ENCODE measurements at regions of chr14 and their contacts with region 1.

Region 1: DNA sequence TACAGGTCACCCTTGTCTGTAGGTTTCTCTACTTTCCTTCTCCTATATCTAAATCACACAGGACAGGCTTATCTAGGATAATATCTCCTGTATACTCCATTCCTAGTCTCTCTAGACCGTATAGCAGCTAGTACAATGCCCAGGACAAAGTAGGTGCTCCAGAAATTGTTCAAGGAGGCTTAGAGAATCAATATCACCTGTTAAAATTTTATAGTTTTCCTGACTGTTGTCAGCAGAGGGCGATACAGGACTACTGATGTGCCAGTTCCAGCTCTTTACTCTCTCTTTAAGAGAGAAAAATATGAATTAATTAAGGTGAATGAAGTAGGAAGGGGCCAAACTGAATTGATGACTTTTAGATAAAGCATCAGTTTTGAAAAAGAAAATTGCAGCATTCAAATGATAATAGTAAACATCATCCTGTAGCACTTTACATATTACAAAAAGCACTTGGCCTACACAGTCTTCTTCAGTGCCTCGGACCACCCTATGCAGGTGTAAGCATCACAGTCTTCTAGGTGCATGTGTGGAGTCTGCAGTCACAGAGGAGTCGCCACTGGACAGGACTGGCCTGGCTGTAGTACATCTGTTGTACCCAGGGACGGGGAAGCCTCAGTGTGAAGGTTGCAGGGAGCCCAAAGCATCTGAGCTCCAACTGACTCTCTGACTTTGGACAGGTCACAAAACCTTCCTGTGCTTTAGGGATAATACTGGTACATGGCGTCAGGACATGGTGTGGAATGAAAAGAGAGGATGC is 61.9 kb upstream of the MAX start:
- DNase-seq: peak; percentile 56 to 64
- ATAC-seq: peak; percentile 75 to 83
- H3K4me3 ChIP-seq: no peak overlapping the region
- H3K27ac ChIP-seq: no peak overlapping the region
- H3K4me1 ChIP-seq: no peaks in the 10 kb centered on the region
- CTCF ChIP-seq: peak; percentile 94
- EP300 ChIP-seq: no peak
- POLR2A ChIP-seq: no peak
- RAD21 ChIP-seq: peak; percentile 96

Region 2: GRCh38 chr14:65131301-65131701 is 32.9 kb before region 1 on chr14:
- CTCF ChIA-PET with region 1: no interaction called
- POLR2A ChIA-PET with region 1: no interaction called
- DNase-seq: peak in 1 of 2 experiments; percentile 34
- ATAC-seq: peak in 1 of 2 experiments; percentile 47; a peak in 1 of 6 replicates
- H3K4me3 ChIP-seq: no peak overlapping the region
- H3K27ac ChIP-seq: no peak overlapping the region
- H3K4me1 ChIP-seq: no peaks in the 10 kb centered on the region
- CTCF ChIP-seq: no peak
- EP300 ChIP-seq: no peak
- POLR2A ChIP-seq: no peak
- RAD21 ChIP-seq: no peak

Region 3: GRCh38 chr14:65177551-65177950 is 13.3 kb after region 1 on chr14:
- CTCF ChIA-PET with region 1: interaction called, 12 read pairs
- POLR2A ChIA-PET with region 1: no interaction called
- DNase-seq: no peak
- ATAC-seq: no peak
- H3K4me3 ChIP-seq: no peak overlapping the region
- H3K27ac ChIP-seq: peak overlapping the region in 1 of 2 experiments; percentile 36; a peak in 2 of 6 replicates
- H3K4me1 ChIP-seq: peaks cover 15% of the 10 kb centered on the region
- CTCF ChIP-seq: no peak
- EP300 ChIP-seq: no peak
- POLR2A ChIP-seq: no peak
- RAD21 ChIP-seq: no peak

Region 4: DNA sequence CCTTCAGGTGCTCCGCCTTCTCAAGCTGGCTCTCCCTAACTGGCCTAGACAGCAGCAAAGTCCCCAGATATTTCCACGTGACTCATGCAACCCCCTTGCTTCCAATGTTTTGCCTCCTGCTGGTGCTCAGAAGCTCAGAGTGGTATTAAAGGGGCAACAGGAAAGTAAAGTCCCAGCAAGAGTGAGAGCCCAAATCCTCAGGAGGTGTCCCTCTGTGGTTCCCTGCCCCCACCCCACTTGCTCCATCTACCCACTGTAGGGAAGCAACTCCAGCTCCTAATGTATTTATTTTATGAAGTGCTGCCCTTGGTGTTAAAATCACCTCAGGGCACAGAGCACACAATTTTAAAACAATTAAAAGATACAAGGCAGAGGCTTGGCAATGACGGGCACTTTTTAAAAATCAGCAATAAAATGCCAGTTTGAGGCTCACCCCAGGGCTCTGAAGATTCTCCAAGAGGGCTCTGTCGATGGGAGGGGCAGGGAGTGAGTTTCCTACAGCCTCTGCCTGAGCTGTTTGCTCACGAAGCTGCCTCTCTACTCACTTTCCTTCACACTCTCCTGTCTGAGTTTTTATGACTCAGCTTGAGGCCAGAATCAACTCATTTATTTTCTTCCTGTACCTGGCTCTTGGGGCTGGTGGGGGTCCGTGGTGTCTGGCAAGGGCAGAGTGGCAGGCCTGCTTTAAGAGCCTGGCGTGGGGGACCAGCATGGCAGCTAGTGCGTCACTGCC is 20.0 kb after region 1 on chr14:
- CTCF ChIA-PET with region 1: interaction called, 16 read pairs
- POLR2A ChIA-PET with region 1: no interaction called
- DNase-seq: peak in 1 of 2 experiments; percentile 23
- ATAC-seq: peak in 1 of 2 experiments; percentile 53; a peak in 3 of 6 replicates
- H3K4me3 ChIP-seq: no peak overlapping the region
- H3K27ac ChIP-seq: peak overlapping the region; percentile 53 to 70; a peak in 5 of 6 replicates
- H3K4me1 ChIP-seq: peaks cover 26% of the 10 kb centered on the region
- CTCF ChIP-seq: no peak
- EP300 ChIP-seq: no peak
- POLR2A ChIP-seq: no peak
- RAD21 ChIP-seq: no peak

Region 5: DNA sequence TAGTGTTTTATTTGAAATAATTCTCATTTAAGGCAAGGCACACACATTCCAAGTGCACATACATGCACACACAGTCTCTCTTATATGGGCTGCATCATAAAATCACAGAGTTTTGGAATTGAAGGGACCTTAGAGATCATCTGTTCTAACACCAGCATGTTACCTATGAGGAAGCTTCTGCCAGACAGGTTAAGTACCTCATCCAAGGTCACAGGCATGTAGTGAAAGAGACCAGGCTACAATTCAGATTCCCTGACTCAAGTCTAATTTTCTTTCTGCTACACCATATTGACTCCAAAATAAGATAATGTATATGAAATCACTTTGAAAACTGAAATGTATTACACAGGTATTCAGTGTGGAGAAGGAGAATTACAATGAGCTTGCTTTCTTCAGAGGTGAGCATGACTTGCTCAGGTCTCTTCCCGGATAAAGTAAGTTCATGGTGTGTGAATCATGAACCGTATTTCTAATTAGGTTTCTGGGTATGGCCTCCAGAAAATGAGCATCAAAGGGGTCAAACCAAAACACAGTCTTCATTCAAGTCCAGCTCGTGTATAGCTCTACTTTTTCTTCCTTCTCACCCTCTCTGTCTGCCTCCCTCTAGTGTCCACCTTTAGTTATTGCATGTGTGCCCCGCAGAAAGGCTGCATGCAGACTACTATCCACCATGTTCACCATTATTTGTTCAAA is 660.2 kb after region 1 on chr14:
- CTCF ChIA-PET with region 1: interaction called, 85 read pairs
- POLR2A ChIA-PET with region 1: interaction called, 3 read pairs
- DNase-seq: peak; percentile 58 to 69
- ATAC-seq: peak; percentile 72 to 90; a peak in 5 of 6 replicates
- H3K4me3 ChIP-seq: no peak overlapping the region
- H3K27ac ChIP-seq: no peak overlapping the region
- H3K4me1 ChIP-seq: no peaks in the 10 kb centered on the region
- CTCF ChIP-seq: peak; percentile 88
- EP300 ChIP-seq: no peak
- POLR2A ChIP-seq: no peak
- RAD21 ChIP-seq: peak; percentile 74 to 77

Region 6: DNA sequence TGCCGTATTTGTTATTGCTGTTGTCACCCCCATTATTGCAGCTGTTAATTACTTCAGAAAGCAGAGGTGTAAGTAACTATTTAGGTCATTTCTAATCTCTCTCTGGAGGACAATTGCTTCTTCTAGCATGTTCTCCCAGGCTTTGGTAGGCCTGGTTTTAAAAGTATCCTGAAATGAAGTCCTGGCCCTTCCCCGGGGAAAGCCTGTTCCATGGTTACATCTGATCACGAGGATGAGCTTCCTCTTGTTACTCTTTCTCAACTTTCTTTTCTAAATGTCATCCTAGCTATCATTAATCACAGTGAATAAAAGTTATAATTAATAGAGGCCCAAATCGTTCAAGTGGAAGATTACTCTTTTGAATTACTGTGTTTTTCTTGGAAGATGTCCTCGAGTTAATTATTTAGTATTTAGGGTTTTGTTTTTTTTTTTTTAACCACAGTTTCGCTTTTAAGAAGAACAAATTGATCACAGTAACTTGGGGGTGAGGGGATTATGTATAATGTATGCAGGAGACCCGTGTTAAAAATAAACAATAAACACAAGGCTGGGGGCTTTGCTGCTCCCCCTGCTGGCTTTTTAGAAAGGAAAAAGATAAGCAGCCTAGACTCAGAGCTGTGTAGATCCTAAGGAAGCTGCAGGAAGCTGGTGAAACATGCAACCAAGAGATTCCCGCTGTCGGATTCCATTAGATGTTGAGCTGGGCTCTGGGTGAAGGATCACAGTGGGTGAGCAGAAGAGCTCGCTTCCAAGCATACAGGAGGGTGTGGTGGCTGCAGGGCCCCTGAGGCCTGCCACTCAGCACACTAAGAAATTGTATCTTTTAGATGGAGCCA is 668.4 kb after region 1 on chr14:
- CTCF ChIA-PET with region 1: interaction called, 85 read pairs
- POLR2A ChIA-PET with region 1: no interaction called
- DNase-seq: peak in 1 of 2 experiments; percentile 24
- ATAC-seq: peak in 1 of 2 experiments; percentile 75; a peak in 3 of 6 replicates
- H3K4me3 ChIP-seq: no peak overlapping the region
- H3K27ac ChIP-seq: no peak overlapping the region
- H3K4me1 ChIP-seq: 0 out of 3 replicates have a peak, but pooled peaks cover 4% of the 10 kb centered on the region
- CTCF ChIP-seq: peak; percentile 47
- EP300 ChIP-seq: no peak
- POLR2A ChIP-seq: no peak
- RAD21 ChIP-seq: peak; percentile 19 to 20; a peak in 2 of 5 replicates

Region 7: GRCh38 chr14:65958664-65959562 is 794.7 kb after region 1 on chr14:
- CTCF ChIA-PET with region 1: interaction called, 45 read pairs
- POLR2A ChIA-PET with region 1: no interaction called
- DNase-seq: peak; percentile 37 to 41
- ATAC-seq: peak in 1 of 2 experiments; percentile 84; a peak in 3 of 6 replicates
- H3K4me3 ChIP-seq: no peak overlapping the region
- H3K27ac ChIP-seq: no peak overlapping the region
- H3K4me1 ChIP-seq: no peaks in the 10 kb centered on the region
- CTCF ChIP-seq: peak; percentile 72
- EP300 ChIP-seq: no peak
- POLR2A ChIP-seq: no peak
- RAD21 ChIP-seq: peak; percentile 46 to 60